ENCODE measurements at regions of chr9 and their contacts with region 1.

Region 1: DNA sequence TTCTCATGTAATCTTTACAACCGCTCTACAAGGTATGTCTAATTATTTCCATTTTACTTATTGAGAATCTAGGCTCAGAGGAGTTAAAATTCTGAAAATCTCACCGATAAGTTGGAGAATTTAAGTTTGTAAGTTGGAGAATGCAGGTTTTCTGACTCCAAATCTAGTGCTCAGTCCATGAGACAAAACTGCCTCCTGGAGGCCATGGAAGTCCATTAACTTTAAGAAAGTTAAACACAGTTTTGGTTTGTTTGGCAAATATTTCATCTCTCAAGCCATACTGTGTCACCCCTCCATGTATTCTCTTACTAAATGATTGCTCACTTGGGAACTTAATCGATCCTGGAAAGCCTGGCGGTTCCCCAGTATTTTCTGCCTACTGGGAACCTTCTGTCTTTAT is 52.6 kb downstream of the INIP start:
- DNase-seq: no peak
- ATAC-seq: no peak
- H3K4me3 Mint-ChIP-seq: no peak overlapping the region
- H3K27ac Mint-ChIP-seq: no peak overlapping the region
- H3K4me1 Mint-ChIP-seq: no peaks in the 10 kb centered on the region
- H3K27me3 Mint-ChIP-seq: no peaks in the 10 kb centered on the region
- CTCF ChIP-seq: no peak

Region 2: GRCh38 chr9:112443200-112443599 is 222.1 kb before region 1 on chr9:
- CTCF ChIA-PET with region 1: interaction called, 3 read pairs
- POLR2A ChIA-PET with region 1: no interaction called
- intact Hi-C with region 1: loop called (anchors 1 kb)
- DNase-seq: no peak
- ATAC-seq: no peak
- H3K4me3 Mint-ChIP-seq: no peak overlapping the region
- H3K27ac Mint-ChIP-seq: no peak overlapping the region
- H3K4me1 Mint-ChIP-seq: peaks cover 30% of the 10 kb centered on the region
- H3K27me3 Mint-ChIP-seq: no peaks in the 10 kb centered on the region
- CTCF ChIP-seq: no peak

Region 3: GRCh38 chr9:112605518-112605917 is 59.8 kb before region 1 on chr9:
- CTCF ChIA-PET with region 1: no interaction called
- POLR2A ChIA-PET with region 1: no interaction called
- intact Hi-C with region 1: loop called (anchors 10 kb)
- DNase-seq: no peak
- ATAC-seq: no peak
- H3K4me3 Mint-ChIP-seq: no peak overlapping the region
- H3K27ac Mint-ChIP-seq: no peak overlapping the region
- H3K4me1 Mint-ChIP-seq: no peaks in the 10 kb centered on the region
- H3K27me3 Mint-ChIP-seq: no peaks in the 10 kb centered on the region
- CTCF ChIP-seq: no peak

Region 4: DNA sequence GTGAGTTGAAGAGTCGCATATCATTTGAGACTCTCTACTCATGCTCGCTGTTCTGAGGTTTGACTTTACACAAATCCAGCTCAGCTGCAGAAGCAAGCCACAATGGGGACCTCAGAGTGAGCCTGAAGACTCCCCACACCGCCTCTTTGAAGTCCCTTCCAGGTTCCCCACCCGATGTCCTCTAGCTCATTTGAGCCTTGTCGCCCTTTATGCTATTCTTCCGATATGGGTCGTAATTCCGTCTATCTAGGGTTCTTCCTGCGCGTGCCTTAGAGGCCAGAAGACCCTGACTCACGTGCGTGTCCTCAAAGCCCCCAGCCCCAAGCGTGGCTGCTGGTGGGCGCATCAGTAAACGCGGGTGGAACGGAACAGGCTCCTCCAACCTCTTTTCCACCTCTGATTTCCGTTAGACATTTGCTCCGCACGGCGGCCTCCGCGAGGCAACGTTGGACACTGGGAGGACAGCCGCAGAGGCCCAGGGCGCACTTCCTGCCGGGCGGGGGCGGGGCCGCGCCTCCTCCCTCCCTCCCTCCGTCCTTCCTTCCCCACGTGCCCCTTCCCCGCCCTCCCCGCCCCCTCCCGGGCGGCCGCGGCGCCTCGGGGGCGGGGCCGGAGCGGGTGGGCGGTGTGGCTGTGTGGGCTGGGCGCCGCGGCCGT is 84.9 kb after region 1 on chr9 and contains the start of gene SNX30:
- CTCF ChIA-PET with region 1: no interaction called
- POLR2A ChIA-PET with region 1: no interaction called
- intact Hi-C with region 1: no loop called
- DNase-seq: peak; percentile 90
- ATAC-seq: peak; percentile 90
- H3K4me3 Mint-ChIP-seq: peak within 1 kb of the TSS; percentile 93
- H3K27ac Mint-ChIP-seq: peak within 1 kb of the TSS; percentile 94
- H3K4me1 Mint-ChIP-seq: peaks cover 42% of the 10 kb centered on the region
- H3K27me3 Mint-ChIP-seq: no peaks in the 10 kb centered on the region
- CTCF ChIP-seq: no peak
- total RNA-seq, gene SNX30: 6.1 and 6.5 TPM in 2 replicates

Region 5: GRCh38 chr9:113011911-113012381 is 346.6 kb after region 1 on chr9 and contains the start of gene ZNF883:
- CTCF ChIA-PET with region 1: no interaction called
- POLR2A ChIA-PET with region 1: no interaction called
- intact Hi-C with region 1: no loop called
- DNase-seq: no peak
- ATAC-seq: peak; percentile 42
- H3K4me3 Mint-ChIP-seq: peak within 1 kb of the TSS; percentile 76
- H3K27ac Mint-ChIP-seq: no peak within 1 kb of the TSS
- H3K4me1 Mint-ChIP-seq: no peaks in the 10 kb centered on the region
- H3K27me3 Mint-ChIP-seq: peaks cover 7% of the 10 kb centered on the region
- CTCF ChIP-seq: no peak
- total RNA-seq, gene ZNF883: 0.33 and 1.0 TPM in 2 replicates